Adrenal gland (tissue), 19 donors: ENCODE measurements at regions of chr1 and their contacts with region 1.

Region 1: DNA sequence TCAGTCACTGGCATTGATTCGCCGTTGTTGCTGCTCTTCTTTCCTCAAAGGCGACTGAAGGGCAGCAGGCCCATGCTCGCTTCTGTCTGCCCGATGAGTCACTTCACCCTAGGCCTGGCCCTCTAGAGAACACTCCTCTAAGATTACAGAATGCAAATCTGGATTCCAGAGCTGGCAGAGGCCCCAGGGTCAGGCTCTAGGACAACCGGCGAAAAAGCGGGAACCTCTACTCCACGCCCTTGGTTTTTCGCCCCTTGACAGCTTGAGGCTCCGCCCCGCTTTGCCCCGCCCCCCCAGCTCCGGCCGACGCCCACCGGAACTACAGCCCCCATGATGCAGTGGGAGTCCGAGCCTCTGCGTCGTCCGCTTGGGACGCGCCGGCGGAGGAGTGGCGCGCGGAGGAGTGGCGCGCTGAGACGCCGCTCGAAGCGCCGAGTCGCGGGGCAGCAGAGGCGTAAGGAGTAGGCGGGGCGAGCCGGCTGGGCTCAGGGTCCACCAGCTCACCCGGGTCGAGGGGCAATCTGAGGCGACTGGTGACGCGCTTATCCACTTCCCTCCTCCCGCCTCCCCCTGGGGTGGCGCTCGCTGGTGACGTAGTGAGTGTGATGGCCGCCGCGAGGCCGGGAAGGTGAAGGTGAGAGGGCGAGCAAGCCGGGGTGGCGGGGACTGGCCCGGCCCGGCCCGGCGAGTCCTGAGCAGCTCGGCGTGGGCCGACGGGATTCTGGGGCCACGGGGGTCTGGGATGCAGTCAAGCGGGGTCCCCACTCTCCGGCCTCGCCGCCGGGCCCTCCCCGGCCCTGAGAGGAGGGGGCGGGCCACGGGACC is at the start of gene MFN2:
- DNase-seq: peak; percentile 97 to 99 (median 99)
- H3K4me3 ChIP-seq: peak within 1 kb of the TSS; percentile 20 to 80 (median 62)
- H3K27ac ChIP-seq: peak within 1 kb of the TSS; percentile 65 to 94 (median 91)
- H3K4me1 ChIP-seq: peaks cover 17 to 23% of the 10 kb centered on the region in 2 donors
- H3K27me3 ChIP-seq: no peaks in the 10 kb centered on the region
- CTCF ChIP-seq: no peak
- POLR2A ChIP-seq: peak; percentile 45 to 85
- total RNA-seq, gene MFN2: 43.7 to 103 (median 65.8) TPM

Region 2: DNA sequence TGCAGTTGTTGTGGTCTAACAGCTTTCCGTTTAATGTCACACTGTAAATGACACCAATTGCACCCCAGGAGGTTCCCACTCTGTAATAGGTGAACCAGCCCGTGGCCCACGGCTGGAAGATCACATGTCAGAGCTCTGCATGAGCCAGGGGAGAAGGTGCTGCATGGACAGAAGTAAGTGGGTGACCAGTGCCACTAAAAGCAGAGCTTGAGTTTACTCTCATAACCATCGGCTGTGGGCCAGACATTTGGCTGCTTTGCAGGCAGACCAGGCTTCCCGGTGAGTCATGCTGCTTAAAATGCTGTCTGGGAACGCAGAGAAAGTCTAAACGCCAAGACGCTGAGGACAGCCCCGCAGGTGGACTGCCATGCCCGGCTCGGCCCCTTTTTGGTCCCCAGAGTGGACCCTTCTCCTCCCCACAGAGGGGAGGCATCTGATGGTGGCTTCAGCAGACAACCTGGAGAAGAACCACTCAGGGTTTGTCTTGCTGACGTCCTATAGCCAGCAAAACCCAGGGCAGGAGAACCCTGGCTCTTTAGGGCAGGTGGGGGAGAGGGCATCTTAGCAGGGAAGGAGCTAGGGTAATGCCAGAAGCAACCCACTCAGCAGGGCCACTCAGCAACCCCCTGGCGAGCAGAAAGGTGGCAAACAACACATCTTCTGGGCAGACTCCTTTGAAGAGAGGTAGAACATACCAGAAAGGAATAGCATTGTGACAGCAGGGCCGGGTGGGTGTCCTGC is 61.1 kb before region 1 on chr1:
- intact Hi-C with region 1: loop called in 1 of 2 experiments (anchors 5 kb)
- DNase-seq: peak; percentile 63 to 86 (median 84)
- H3K4me3 ChIP-seq: no peak overlapping the region
- H3K27ac ChIP-seq: peak overlapping the region in 4 of 5 donors; percentile 15 to 57 (median 32)
- H3K4me1 ChIP-seq: peaks cover 15 to 22% of the 10 kb centered on the region in 2 donors
- H3K27me3 ChIP-seq: no peaks in the 10 kb centered on the region
- CTCF ChIP-seq: no peak
- POLR2A ChIP-seq: no peak